Ascending aorta (tissue), 2 donors: ENCODE measurements at regions of chr5 and their contacts with region 1.

Region 1: DNA sequence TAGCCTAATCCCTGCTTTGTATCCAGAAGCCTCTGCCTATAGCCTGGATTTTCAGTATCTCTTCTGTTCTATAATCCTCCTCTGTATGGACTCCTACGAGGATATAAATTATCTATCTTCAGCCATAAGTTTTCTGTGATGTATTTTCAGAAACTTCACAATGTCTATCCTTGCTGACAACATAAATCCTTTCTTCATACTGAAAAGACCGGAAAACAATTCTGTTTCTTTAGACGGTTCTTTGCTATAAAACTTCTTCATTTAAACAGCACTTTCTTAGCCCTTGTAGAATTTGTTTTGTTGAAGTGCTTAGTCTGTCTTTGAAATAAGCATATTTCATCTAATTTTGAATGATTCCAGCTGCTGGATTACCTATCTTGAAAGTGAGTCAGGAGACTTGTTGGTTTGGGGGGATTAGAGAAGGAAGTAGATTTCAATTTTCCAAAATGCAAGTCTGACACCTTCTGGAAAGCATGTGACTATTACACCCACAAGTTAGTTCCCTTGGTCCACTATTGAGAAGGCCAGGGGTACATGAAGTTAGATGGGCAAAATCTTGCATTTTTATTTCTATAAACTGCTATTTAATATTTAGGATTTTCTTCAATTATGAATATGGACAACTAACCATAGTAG is 96.3 kb upstream of the RANBP3L start:
- DNase-seq: no peak
- H3K4me3 ChIP-seq: no peak overlapping the region
- H3K27ac ChIP-seq: no peak overlapping the region
- H3K4me1 ChIP-seq: peaks cover 0 to 7% of the 10 kb centered on the region in 2 donors
- H3K27me3 ChIP-seq: no peaks in the 10 kb centered on the region
- CTCF ChIP-seq: peak in 1 of 3 experiments; percentile 40

Region 2: DNA sequence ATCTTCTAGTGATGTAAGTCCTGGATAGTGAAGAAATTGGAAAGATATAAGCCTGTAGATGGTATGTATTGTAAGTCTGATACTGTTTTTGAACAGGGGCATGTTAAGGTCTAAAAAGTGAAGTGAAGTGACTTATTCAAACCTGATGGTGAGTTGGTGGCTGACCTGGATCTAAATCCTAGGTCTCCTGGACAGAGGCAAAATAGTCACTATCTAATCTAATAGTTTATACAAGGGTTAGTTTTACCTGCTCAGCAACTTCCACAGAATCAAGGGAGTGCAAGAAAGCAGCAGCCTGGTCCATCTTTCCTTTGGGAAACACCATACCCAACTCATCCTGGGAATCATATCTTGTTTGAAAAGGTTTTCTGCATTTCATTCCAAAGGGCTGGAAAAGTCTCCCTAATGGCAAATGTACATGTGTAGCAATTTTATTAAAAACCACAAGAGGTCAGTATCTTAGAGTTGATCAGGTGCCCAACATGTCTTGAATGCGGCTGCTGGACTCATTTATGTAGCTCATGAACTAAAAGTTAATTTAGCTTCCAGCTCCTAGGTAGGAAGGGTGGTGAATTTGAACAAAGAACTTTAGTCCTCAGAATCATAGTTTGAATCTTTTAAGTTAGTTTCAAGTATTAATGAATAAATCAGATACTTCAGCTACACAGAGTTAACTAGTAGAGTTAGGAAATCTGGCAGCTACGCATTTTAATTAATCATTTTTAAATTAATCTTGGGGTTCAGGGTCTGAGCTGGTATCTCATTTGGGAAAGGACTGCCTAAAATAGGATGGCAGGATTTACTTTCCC is 220.1 kb before region 1 on chr5:
- intact Hi-C with region 1: loop called (anchors 2 kb)
- DNase-seq: no peak
- H3K4me3 ChIP-seq: no peak overlapping the region
- H3K27ac ChIP-seq: no peak overlapping the region
- H3K4me1 ChIP-seq: no peaks in the 10 kb centered on the region
- H3K27me3 ChIP-seq: no peaks in the 10 kb centered on the region
- CTCF ChIP-seq: peak in 2 of 3 experiments; percentile 53 to 59

Region 3: GRCh38 chr5:36241631-36242533 is 156.1 kb before region 1 on chr5 and contains the start of gene NADK2:
- intact Hi-C with region 1: loop called (anchors 10 kb)
- DNase-seq: peak; percentile 90 to 98
- H3K4me3 ChIP-seq: peak within 1 kb of the TSS; percentile 65 to 88
- H3K27ac ChIP-seq: peak within 1 kb of the TSS; percentile 93 to 95
- H3K4me1 ChIP-seq: peaks cover 0 to 8% of the 10 kb centered on the region in 2 donors
- H3K27me3 ChIP-seq: no peaks in the 10 kb centered on the region
- CTCF ChIP-seq: peak; percentile 60 to 84 (median 74)
- total RNA-seq, gene NADK2: 18.4 TPM

Region 4: GRCh38 chr5:36269479-36270219 is 128.4 kb before region 1 on chr5:
- intact Hi-C with region 1: loop called (anchors 5 kb)
- DNase-seq: no peak
- H3K4me3 ChIP-seq: no peak overlapping the region
- H3K27ac ChIP-seq: no peak overlapping the region
- H3K4me1 ChIP-seq: peaks cover 0 to 11% of the 10 kb centered on the region in 2 donors
- H3K27me3 ChIP-seq: no peaks in the 10 kb centered on the region
- CTCF ChIP-seq: no peak

Region 5: DNA sequence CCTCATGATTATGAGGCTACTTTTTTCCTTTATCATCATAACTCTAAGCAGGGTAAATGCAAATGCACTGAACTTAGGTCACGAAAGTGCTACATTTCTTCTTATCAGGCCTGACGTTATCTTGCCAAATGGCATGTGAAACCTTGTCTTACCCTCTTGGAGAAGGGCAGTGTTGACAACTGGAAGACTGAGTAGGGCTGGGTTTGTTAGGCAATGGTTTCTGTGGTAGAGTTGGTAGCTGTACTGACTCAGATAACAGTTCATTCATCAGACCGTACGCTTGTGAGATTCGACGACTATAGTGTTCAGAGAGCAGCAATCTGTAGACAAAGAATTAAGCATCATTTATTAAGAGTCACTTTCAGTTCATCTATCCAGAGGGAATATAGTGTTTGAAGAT is 723.4 kb after region 1 on chr5:
- intact Hi-C with region 1: no loop called
- DNase-seq: no peak
- H3K4me3 ChIP-seq: no peak overlapping the region
- H3K27ac ChIP-seq: no peak overlapping the region
- H3K4me1 ChIP-seq: no peaks in the 10 kb centered on the region
- H3K27me3 ChIP-seq: no peaks in the 10 kb centered on the region
- CTCF ChIP-seq: no peak